ENCODE measurements at regions of chr1 and their contacts with region 1.

Region 1: GRCh38 chr1:116574581-116575291 is 3.9 kb upstream of the CD58 start:
- DNase-seq: peak; percentile 60
- ATAC-seq: no peak
- H3K4me3 Mint-ChIP-seq: no peak overlapping the region
- H3K27ac Mint-ChIP-seq: no peak overlapping the region
- H3K4me1 Mint-ChIP-seq: peaks cover 29% of the 10 kb centered on the region
- H3K27me3 Mint-ChIP-seq: peaks cover 17% of the 10 kb centered on the region
- CTCF ChIP-seq: peak; percentile 64

Region 2: DNA sequence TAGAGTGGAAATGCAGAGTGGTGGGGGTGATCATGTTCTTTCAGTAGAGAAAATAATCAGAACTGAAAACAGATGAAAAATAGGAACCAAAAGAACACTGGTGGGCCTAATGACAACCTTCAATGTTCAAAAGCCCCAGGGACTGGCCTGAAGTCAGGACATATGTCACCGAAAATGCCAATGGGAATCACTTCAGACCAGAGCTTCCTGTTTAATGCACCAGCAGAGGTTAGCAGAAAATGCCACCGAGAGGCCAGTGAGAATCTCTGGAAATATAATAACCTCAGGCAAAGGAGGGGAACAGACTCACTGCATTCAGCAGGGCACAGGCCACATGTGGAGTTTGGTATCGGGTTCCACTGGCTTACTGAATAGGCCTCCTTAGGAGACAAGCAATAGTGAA is 12.0 kb after region 1 on chr1:
- CTCF ChIA-PET with region 1: interaction called, 30 read pairs
- POLR2A ChIA-PET with region 1: no interaction called
- DNase-seq: no peak
- ATAC-seq: peak; percentile 72
- H3K4me3 Mint-ChIP-seq: no peak overlapping the region
- H3K27ac Mint-ChIP-seq: peak overlapping the region; percentile 52; the same call in 1 of the 2 replicates
- H3K4me1 Mint-ChIP-seq: peaks cover 20% of the 10 kb centered on the region
- H3K27me3 Mint-ChIP-seq: no peaks in the 10 kb centered on the region
- CTCF ChIP-seq: no peak

Region 3: GRCh38 chr1:116667575-116668105 is 92.9 kb after region 1 on chr1 and contains the start of gene IGSF3:
- CTCF ChIA-PET with region 1: interaction called, 48 read pairs
- POLR2A ChIA-PET with region 1: interaction called, 4 read pairs
- DNase-seq: peak; percentile 82
- ATAC-seq: peak; percentile 86
- H3K4me3 Mint-ChIP-seq: peak within 1 kb of the TSS; percentile 83
- H3K27ac Mint-ChIP-seq: no peak within 1 kb of the TSS
- H3K4me1 Mint-ChIP-seq: peaks cover 38% of the 10 kb centered on the region
- H3K27me3 Mint-ChIP-seq: peaks cover 29% of the 10 kb centered on the region
- CTCF ChIP-seq: no peak
- total RNA-seq, gene IGSF3: 31.7 to 32.4 TPM (median 32.1 TPM) in 3 replicates

Region 4: GRCh38 chr1:117059678-117060440 is 485.1 kb after region 1 on chr1 and contains the start of gene TTF2:
- CTCF ChIA-PET with region 1: interaction called, 15 read pairs
- POLR2A ChIA-PET with region 1: interaction called, 4 read pairs
- DNase-seq: peak; percentile 97
- ATAC-seq: peak; percentile 98
- H3K4me3 Mint-ChIP-seq: no peak within 1 kb of the TSS
- H3K27ac Mint-ChIP-seq: peak within 1 kb of the TSS; percentile 72
- H3K4me1 Mint-ChIP-seq: peaks cover 18% of the 10 kb centered on the region
- H3K27me3 Mint-ChIP-seq: no peaks in the 10 kb centered on the region
- CTCF ChIP-seq: no peak
- total RNA-seq, gene TTF2: 78.9 to 88.8 TPM (median 79.1 TPM) in 3 replicates

Measured in WTC11 (cell line).